ENCODE measurements at regions of chr19 and their contacts with region 1.

Region 1: GRCh38 chr19:38134540-38135149 is 89.4 kb downstream of the DPF1 start:
- DNase-seq: peak; percentile 74 to 81
- ATAC-seq: peak; percentile 54 to 63
- H3K4me3 ChIP-seq: no peak overlapping the region
- H3K27ac ChIP-seq: no peak overlapping the region
- H3K4me1 ChIP-seq: 0 out of 3 replicates have a peak, but pooled peaks cover 6% of the 10 kb centered on the region
- CTCF ChIP-seq: peak; percentile 83
- EP300 ChIP-seq: no peak
- POLR2A ChIP-seq: no peak
- RAD21 ChIP-seq: peak in 1 of 2 experiments; percentile 44; a peak in 4 of 5 replicates

Region 2: GRCh38 chr19:38107129-38107528 is 27.5 kb before region 1 on chr19:
- CTCF ChIA-PET with region 1: interaction called, 23 read pairs
- POLR2A ChIA-PET with region 1: no interaction called
- DNase-seq: no peak
- ATAC-seq: peak in 1 of 2 experiments; percentile 8; a peak in 1 of 6 replicates
- H3K4me3 ChIP-seq: no peak overlapping the region
- H3K27ac ChIP-seq: peak overlapping the region in 1 of 2 experiments; percentile 5; a peak in 1 of 6 replicates
- H3K4me1 ChIP-seq: peaks cover 9% of the 10 kb centered on the region; the same call in 2 of the 3 replicates
- CTCF ChIP-seq: no peak
- EP300 ChIP-seq: no peak
- POLR2A ChIP-seq: no peak
- RAD21 ChIP-seq: no peak

Region 3: GRCh38 chr19:38122402-38123093 is 12.1 kb before region 1 on chr19:
- CTCF ChIA-PET with region 1: interaction called, 13 read pairs
- POLR2A ChIA-PET with region 1: no interaction called
- DNase-seq: no peak
- ATAC-seq: peak; percentile 30 to 52
- H3K4me3 ChIP-seq: no peak overlapping the region
- H3K27ac ChIP-seq: no peak overlapping the region
- H3K4me1 ChIP-seq: no peaks in the 10 kb centered on the region
- CTCF ChIP-seq: no peak
- EP300 ChIP-seq: no peak
- POLR2A ChIP-seq: no peak
- RAD21 ChIP-seq: no peak

Region 4: GRCh38 chr19:38155453-38155852 is 20.8 kb after region 1 on chr19:
- CTCF ChIA-PET with region 1: interaction called, 67 read pairs
- POLR2A ChIA-PET with region 1: interaction called, 4 read pairs
- DNase-seq: peak in 1 of 2 experiments; percentile 59
- ATAC-seq: peak in 1 of 2 experiments; percentile 34; a peak in 3 of 6 replicates
- H3K4me3 ChIP-seq: no peak overlapping the region
- H3K27ac ChIP-seq: no peak overlapping the region
- H3K4me1 ChIP-seq: no peaks in the 10 kb centered on the region
- CTCF ChIP-seq: no peak
- EP300 ChIP-seq: no peak
- POLR2A ChIP-seq: no peak
- RAD21 ChIP-seq: no peak

Region 5: GRCh38 chr19:38183251-38183897 is 48.7 kb after region 1 on chr19:
- CTCF ChIA-PET with region 1: interaction called, 12 read pairs
- POLR2A ChIA-PET with region 1: no interaction called
- DNase-seq: no peak
- ATAC-seq: peak; percentile 54 to 69; a peak in 5 of 6 replicates
- H3K4me3 ChIP-seq: no peak overlapping the region
- H3K27ac ChIP-seq: no peak overlapping the region
- H3K4me1 ChIP-seq: no peaks in the 10 kb centered on the region
- CTCF ChIP-seq: no peak
- EP300 ChIP-seq: no peak
- POLR2A ChIP-seq: no peak
- RAD21 ChIP-seq: no peak